Activated CD4-positive, alpha-beta T cell treated with anti-CD3 and anti-CD28 coated beads for 36 hours (primary cell): ENCODE measurements at regions of chr4 and their contacts with region 1.

Region 1: DNA sequence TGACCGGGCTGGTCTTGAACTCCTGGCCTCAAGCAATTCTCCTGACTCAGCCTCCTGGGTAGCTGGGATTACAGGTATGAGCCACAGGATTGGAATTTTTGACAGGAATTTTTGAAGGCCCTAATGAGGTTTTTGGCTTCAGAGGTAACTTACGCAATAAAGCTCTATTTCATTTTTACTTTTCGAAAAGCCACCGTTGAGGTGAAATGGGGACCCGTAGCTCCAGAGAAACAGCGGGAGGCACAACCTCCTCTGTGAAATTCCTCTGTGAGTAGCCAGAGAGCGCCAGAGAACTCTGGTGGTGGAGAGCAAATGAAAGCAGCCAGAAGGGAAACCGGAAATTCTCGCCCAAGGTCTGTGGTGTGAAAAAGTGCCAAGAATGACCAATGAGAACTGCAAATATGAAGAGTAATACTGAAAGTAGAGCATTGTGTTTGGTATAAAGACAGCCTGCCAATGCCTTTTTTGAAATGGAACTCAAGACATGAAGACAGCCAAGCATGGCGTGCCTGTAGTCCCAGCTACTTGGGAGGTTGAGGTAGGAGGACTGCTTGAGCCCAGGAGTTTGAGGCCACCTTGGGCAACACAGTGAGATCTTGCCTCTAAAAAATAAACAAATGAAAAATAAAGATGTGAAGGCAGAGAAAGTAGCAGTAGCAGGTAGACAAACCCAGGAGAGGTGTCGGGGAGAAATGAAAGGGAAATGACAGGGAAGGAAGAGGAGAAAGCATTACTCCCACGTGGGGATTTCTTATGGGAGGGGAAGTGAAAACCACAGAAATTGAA is 33.0 kb upstream of the TMEM131L start:
- DNase-seq: peak; percentile 86
- ATAC-seq: peak; percentile 87
- H3K4me3 Mint-ChIP-seq: peak overlapping the region; percentile 68
- H3K27ac Mint-ChIP-seq: peak overlapping the region; percentile 93
- H3K4me1 Mint-ChIP-seq: peaks cover 62% of the 10 kb centered on the region
- H3K27me3 Mint-ChIP-seq: no peaks in the 10 kb centered on the region

Region 2: GRCh38 chr4:153344131-153345010 is 88.8 kb before region 1 on chr4 and contains the start of gene MND1:
- CTCF ChIA-PET with region 1: interaction called, 4 read pairs
- POLR2A ChIA-PET with region 1: interaction called, 3 read pairs
- intact Hi-C with region 1: loop called (anchors 1 kb)
- DNase-seq: peak; percentile 96
- ATAC-seq: peak; percentile 93
- H3K4me3 Mint-ChIP-seq: peak within 1 kb of the TSS; percentile 85
- H3K27ac Mint-ChIP-seq: peak within 1 kb of the TSS; percentile 90
- H3K4me1 Mint-ChIP-seq: peaks cover 36% of the 10 kb centered on the region
- H3K27me3 Mint-ChIP-seq: peaks cover 7% of the 10 kb centered on the region
- total RNA-seq, gene MND1: 34.1 to 41.9 TPM

Region 3: GRCh38 chr4:153528705-153529485 is 95.7 kb after region 1 on chr4:
- CTCF ChIA-PET with region 1: interaction called, 6 read pairs
- POLR2A ChIA-PET with region 1: no interaction called
- intact Hi-C with region 1: loop called (anchors 2 to 5 kb)
- DNase-seq: no peak
- ATAC-seq: peak; percentile 69
- H3K4me3 Mint-ChIP-seq: peak overlapping the region; percentile 57
- H3K27ac Mint-ChIP-seq: peak overlapping the region; percentile 100
- H3K4me1 Mint-ChIP-seq: peaks cover 94% of the 10 kb centered on the region
- H3K27me3 Mint-ChIP-seq: no peaks in the 10 kb centered on the region

Region 4: GRCh38 chr4:153616006-153616555 is 182.9 kb after region 1 on chr4:
- CTCF ChIA-PET with region 1: interaction called, 3 read pairs
- POLR2A ChIA-PET with region 1: no interaction called
- intact Hi-C with region 1: loop called in 1 of 2 experiments (anchors 1 kb)
- DNase-seq: peak; percentile 80
- ATAC-seq: peak; percentile 96
- H3K4me3 Mint-ChIP-seq: no peak overlapping the region
- H3K27ac Mint-ChIP-seq: peak overlapping the region; percentile 72
- H3K4me1 Mint-ChIP-seq: peaks cover 40% of the 10 kb centered on the region
- H3K27me3 Mint-ChIP-seq: no peaks in the 10 kb centered on the region

Region 5: DNA sequence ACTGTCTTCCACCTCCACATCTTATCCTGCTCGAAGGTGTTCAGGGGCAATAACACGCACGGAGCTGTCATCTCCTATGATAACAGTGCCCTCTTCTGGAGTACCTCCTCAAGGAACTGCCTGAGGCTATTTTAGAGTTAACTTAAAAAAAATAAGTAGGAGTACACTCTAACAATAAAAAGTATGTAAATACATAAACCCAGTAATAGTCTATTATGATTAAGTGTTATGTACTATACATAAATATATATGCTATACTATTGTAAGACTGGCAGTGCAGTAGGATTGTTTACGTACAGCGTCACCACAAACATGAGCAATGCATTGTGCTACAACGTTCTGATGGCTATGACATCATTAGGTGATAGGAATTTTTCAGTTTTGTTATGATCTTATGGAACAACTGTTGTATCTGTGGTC is 216.4 kb after region 1 on chr4:
- CTCF ChIA-PET with region 1: interaction called, 3 read pairs
- POLR2A ChIA-PET with region 1: no interaction called
- intact Hi-C with region 1: loop called in 1 of 2 experiments (anchors 5 kb)
- DNase-seq: peak; percentile 44
- ATAC-seq: peak; percentile 24
- H3K4me3 Mint-ChIP-seq: no peak overlapping the region
- H3K27ac Mint-ChIP-seq: no peak overlapping the region
- H3K4me1 Mint-ChIP-seq: peaks cover 37% of the 10 kb centered on the region
- H3K27me3 Mint-ChIP-seq: no peaks in the 10 kb centered on the region